Activated CD4-positive, alpha-beta memory T cell treated with anti-CD3 and anti-CD28 coated beads, Interleukin-2, amount 10 ng/mL, durations not matched to agents 7 days and 5 days (primary cell): ENCODE measurements at regions of chr20 and their contacts with region 1.

Region 1: DNA sequence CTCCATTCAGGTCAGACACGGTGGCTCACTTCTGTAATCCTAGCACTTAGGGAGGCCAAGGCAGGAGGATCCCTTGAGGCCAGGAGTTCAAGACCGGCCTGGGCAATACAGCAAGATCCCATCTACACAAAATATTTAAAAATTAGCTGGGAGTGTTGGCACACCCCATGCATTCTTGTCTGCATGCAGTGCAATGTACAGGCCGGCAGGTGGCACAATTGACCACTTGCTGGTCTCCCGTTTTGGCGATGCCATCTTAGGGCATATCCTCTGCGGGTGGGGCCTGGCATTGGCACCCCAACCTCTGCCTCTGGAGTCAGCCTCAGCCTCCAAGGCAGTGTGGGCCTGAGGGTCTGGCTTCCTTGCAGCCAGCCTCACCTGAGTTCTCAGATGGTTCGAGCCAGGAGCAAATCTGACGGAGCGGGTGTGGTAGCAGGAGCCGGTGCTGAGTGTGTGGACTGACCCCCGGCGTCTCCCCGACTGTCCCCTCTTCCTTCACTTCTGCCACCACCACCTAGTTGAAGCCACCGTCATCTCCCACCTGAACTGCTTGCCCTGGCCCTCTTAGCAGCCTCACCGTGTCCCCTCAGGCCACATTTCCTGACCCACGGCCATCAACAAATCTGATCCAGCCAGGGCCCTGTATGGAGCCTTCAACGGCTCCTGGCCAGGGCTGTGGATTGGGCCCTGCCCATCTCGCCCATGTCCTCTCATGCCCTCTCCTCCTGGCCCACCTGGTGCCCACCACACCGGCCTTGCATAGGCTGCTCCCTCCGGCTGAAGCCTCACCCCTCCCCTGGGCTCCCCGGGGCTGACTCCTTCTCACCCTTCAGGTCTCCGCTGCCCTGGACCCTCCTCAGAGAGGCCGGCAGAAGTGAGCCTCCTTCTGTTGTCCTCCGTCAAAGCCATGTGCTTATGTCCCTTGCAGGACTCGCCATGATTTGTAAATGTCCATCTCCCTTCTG is 44.0 kb downstream of the EFCAB8 start:
- DNase-seq: peak; percentile 75
- H3K4me3 Mint-ChIP-seq: no peak overlapping the region
- H3K27ac Mint-ChIP-seq: no peak overlapping the region
- H3K4me1 Mint-ChIP-seq: no peaks in the 10 kb centered on the region
- H3K27me3 Mint-ChIP-seq: no peaks in the 10 kb centered on the region

Region 2: DNA sequence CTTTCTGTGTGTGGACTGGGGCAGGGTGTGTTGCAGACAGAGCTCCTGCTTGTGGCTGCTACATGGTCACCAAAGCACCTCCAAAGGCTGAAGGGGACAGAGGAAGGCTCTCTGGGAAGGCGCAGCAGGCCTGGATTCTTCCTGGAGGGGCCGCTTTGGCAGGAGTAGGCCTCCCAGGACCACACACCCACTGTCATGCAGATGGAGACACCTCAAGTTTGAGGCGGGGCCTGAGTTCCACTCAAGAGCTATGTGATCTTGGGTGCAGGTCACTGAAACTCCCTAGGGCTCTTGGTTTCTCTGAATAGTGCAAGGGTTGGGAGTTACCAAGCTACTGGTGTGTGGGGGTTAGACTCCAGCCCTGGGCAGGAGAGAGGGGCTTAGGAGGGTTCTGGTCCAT is 16.1 kb before region 1 on chr20:
- CTCF ChIA-PET with region 1: no interaction called
- POLR2A ChIA-PET with region 1: no interaction called
- DNase-seq: no peak
- H3K4me3 Mint-ChIP-seq: no peak overlapping the region
- H3K27ac Mint-ChIP-seq: no peak overlapping the region
- H3K4me1 Mint-ChIP-seq: no peaks in the 10 kb centered on the region
- H3K27me3 Mint-ChIP-seq: no peaks in the 10 kb centered on the region

Region 3: GRCh38 chr20:32945710-32946221 is 43.0 kb after region 1 on chr20:
- CTCF ChIA-PET with region 1: interaction called, 16 read pairs
- POLR2A ChIA-PET with region 1: interaction called, 3 read pairs
- DNase-seq: no peak
- H3K4me3 Mint-ChIP-seq: no peak overlapping the region
- H3K27ac Mint-ChIP-seq: peak overlapping the region; percentile 18
- H3K4me1 Mint-ChIP-seq: peaks cover 14% of the 10 kb centered on the region
- H3K27me3 Mint-ChIP-seq: no peaks in the 10 kb centered on the region

Region 4: DNA sequence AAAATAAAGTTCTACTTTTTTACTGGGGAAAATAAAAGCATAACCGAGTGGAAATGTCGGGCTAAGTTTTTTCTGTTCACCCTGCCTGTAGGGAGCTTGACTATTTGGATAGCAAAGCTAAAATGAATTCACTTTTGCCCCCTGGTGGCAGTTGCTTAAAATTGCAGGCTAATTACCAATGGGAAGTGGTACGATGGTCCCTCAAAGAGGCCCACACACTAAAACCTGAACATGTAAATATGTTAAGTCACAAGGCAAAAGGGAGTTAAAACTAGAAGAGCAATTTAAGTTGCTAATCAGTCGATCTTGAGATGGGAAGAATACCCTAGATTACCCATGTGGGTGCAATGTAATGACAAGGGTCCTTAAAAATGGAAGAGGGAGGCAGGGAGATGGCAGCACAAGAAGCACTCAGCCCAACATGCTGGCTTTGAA is 102.4 kb after region 1 on chr20:
- CTCF ChIA-PET with region 1: interaction called, 41 read pairs
- POLR2A ChIA-PET with region 1: interaction called, 4 read pairs
- DNase-seq: peak; percentile 35
- H3K4me3 Mint-ChIP-seq: no peak overlapping the region
- H3K27ac Mint-ChIP-seq: no peak overlapping the region
- H3K4me1 Mint-ChIP-seq: no peaks in the 10 kb centered on the region
- H3K27me3 Mint-ChIP-seq: no peaks in the 10 kb centered on the region

Region 5: DNA sequence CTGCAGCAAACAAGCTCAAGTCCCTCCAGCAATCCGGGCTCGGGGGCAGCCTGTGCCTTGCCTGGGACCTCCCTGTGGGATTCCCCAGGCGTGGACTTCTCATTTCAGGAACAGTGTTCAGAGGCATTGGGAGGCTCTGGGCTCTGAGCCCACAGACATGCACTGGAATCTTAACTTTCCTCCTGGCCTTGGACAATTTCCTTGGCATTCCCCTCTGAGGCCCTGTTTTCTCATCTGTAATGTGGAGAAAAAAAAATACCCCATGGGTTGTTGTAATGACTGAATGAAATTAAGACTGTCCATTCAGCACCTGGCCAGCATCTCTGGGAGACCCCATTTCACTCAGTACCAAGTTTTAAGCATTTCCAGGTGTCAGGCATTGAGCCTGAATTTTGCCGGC is 194.3 kb after region 1 on chr20:
- CTCF ChIA-PET with region 1: interaction called, 24 read pairs
- POLR2A ChIA-PET with region 1: no interaction called
- DNase-seq: no peak
- H3K4me3 Mint-ChIP-seq: no peak overlapping the region
- H3K27ac Mint-ChIP-seq: no peak overlapping the region
- H3K4me1 Mint-ChIP-seq: no peaks in the 10 kb centered on the region
- H3K27me3 Mint-ChIP-seq: no peaks in the 10 kb centered on the region

Region 6: GRCh38 chr20:33291830-33292355 is 389.2 kb after region 1 on chr20:
- CTCF ChIA-PET with region 1: interaction called, 11 read pairs
- POLR2A ChIA-PET with region 1: no interaction called
- DNase-seq: peak; percentile 68
- H3K4me3 Mint-ChIP-seq: no peak overlapping the region
- H3K27ac Mint-ChIP-seq: no peak overlapping the region
- H3K4me1 Mint-ChIP-seq: no peaks in the 10 kb centered on the region
- H3K27me3 Mint-ChIP-seq: peaks cover 6% of the 10 kb centered on the region